Heart left ventricle (tissue), 16 donors: ENCODE measurements at regions of chr1 and their contacts with region 1.

Region 1: GRCh38 chr1:101996825-101997465 is at the start of gene OLFM3:
- DNase-seq: peak in 2 of 5 donors; percentile 24 to 34
- ATAC-seq: peak; percentile 32 to 84 (median 64)
- H3K4me3 ChIP-seq: no peak within 1 kb of the TSS
- H3K27ac ChIP-seq: no peak within 1 kb of the TSS
- H3K4me1 ChIP-seq: peaks cover 0 to 7% (median 0%) of the 10 kb centered on the region in 12 donors
- H3K27me3 ChIP-seq: peaks cover 0 to 16% (median 0%) of the 10 kb centered on the region in 9 donors
- CTCF ChIP-seq: no peak
- POLR2A ChIP-seq: no peak
- total RNA-seq, gene OLFM3: not detected

Region 2: DNA sequence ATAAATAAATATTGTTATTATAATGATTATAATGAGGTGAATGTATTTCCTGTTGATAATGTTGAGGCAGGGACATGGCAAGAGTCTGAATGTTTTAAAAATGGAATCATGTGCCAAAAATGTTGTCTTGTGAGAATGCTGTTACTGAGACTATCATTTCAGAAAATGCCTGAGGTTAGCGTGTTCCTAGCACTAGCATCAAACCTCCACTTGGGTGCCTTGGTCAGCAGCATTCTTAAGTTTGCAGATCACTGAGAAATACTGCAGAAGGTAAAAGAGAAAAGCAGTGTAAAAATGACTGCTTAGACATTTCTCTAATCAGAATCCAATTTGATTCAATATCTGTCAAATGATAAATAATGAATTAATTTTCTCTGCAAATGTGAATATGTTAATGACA is 51.1 kb before region 1 on chr1:
- intact Hi-C with region 1: loop called in 1 of 10 experiments (anchors 5 kb)
- DNase-seq: no peak
- ATAC-seq: no peak
- H3K4me3 ChIP-seq: no peak overlapping the region
- H3K27ac ChIP-seq: no peak overlapping the region
- H3K4me1 ChIP-seq: no peaks in the 10 kb centered on the region
- H3K27me3 ChIP-seq: no peaks in the 10 kb centered on the region
- CTCF ChIP-seq: no peak
- POLR2A ChIP-seq: no peak

Region 3: DNA sequence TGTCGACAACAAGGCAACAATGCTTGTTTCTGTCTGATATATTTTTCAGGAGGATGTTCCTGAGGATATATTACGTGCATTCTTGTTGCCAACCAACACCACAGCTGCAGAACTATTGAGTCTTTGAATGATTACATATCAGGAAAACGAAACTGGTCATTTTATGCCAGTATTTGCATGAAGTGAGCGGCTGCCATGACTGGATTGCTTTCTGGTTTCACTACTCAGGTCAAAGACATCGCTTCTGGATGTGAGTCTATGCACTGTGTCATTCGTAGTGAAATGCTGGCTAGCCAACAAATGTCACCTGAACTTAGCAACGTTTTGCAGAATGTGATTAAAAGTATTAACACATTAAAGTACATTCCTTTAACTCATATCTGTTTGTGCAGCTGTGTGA is 35.6 kb after region 1 on chr1:
- intact Hi-C with region 1: no loop called
- DNase-seq: no peak
- ATAC-seq: no peak
- H3K4me3 ChIP-seq: no peak overlapping the region
- H3K27ac ChIP-seq: no peak overlapping the region
- H3K4me1 ChIP-seq: no peaks in the 10 kb centered on the region
- H3K27me3 ChIP-seq: no peaks in the 10 kb centered on the region
- CTCF ChIP-seq: no peak
- POLR2A ChIP-seq: no peak

Region 4: DNA sequence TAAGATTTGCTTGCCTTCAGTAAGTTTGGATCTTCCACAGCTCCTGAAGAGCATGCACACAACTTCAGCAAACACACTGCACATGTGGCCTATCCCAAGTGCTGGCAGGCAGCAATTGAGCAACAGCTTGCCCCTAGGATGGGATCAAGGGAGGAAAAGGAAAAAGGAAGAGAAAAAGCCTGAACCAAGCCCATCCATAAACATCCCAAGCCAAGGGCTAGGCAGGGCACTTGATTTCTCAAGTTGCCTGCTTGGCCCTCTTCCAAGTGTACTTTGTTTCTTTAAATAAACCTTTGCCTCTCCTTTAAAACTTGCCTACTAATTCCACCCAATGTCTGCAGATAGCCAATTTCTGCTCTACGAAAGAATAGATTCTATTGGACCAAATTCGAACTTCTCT is 48.8 kb after region 1 on chr1:
- intact Hi-C with region 1: no loop called
- DNase-seq: no peak
- ATAC-seq: no peak
- H3K4me3 ChIP-seq: no peak overlapping the region
- H3K27ac ChIP-seq: no peak overlapping the region
- H3K4me1 ChIP-seq: no peaks in the 10 kb centered on the region
- H3K27me3 ChIP-seq: no peaks in the 10 kb centered on the region
- CTCF ChIP-seq: no peak
- POLR2A ChIP-seq: no peak